ENCODE measurements at regions of chr17 and their contacts with region 1.

Region 1: GRCh38 chr17:57004944-57005579 is 27.1 kb downstream of the SCPEP1 start:
- DNase-seq: no peak
- H3K4me3 ChIP-seq: no peak overlapping the region
- H3K27ac ChIP-seq: no peak overlapping the region
- H3K4me1 ChIP-seq: no peaks in the 10 kb centered on the region
- H3K27me3 ChIP-seq: no peaks in the 10 kb centered on the region
- CTCF ChIP-seq: peak; percentile 35 to 59 (median 39)

Region 2: GRCh38 chr17:57033295-57033694 is 28.2 kb after region 1 on chr17:
- intact Hi-C with region 1: no loop called
- DNase-seq: peak in 1 of 2 donors; percentile 86
- H3K4me3 ChIP-seq: no peak overlapping the region
- H3K27ac ChIP-seq: peak overlapping the region; percentile 85 to 92
- H3K4me1 ChIP-seq: peaks cover 8 to 43% of the 10 kb centered on the region in 2 donors
- H3K27me3 ChIP-seq: no peaks in the 10 kb centered on the region
- CTCF ChIP-seq: no peak

Region 3: GRCh38 chr17:57045868-57046704 is 41.0 kb after region 1 on chr17:
- intact Hi-C with region 1: loop called (anchors 2 kb)
- DNase-seq: peak in 1 of 2 donors; percentile 65
- H3K4me3 ChIP-seq: peak overlapping the region; percentile 50 to 62
- H3K27ac ChIP-seq: peak overlapping the region; percentile 42 to 61
- H3K4me1 ChIP-seq: peaks cover 0 to 6% of the 10 kb centered on the region in 2 donors
- H3K27me3 ChIP-seq: peaks cover 3% of the 10 kb centered on the region
- CTCF ChIP-seq: no peak

Region 4: GRCh38 chr17:57114085-57114673 is 109.1 kb after region 1 on chr17:
- intact Hi-C with region 1: loop called (anchors 1 kb)
- DNase-seq: no peak
- H3K4me3 ChIP-seq: no peak overlapping the region
- H3K27ac ChIP-seq: peak overlapping the region in 1 of 2 donors; percentile 28
- H3K4me1 ChIP-seq: peaks cover 17 to 34% of the 10 kb centered on the region in 2 donors
- H3K27me3 ChIP-seq: no peaks in the 10 kb centered on the region
- CTCF ChIP-seq: peak; percentile 60 to 91 (median 84)

Measured in ascending aorta (tissue), 2 donors.